Tibial artery (tissue), 4 donors: ENCODE measurements at regions of chr3 and their contacts with region 1.

Region 1: DNA sequence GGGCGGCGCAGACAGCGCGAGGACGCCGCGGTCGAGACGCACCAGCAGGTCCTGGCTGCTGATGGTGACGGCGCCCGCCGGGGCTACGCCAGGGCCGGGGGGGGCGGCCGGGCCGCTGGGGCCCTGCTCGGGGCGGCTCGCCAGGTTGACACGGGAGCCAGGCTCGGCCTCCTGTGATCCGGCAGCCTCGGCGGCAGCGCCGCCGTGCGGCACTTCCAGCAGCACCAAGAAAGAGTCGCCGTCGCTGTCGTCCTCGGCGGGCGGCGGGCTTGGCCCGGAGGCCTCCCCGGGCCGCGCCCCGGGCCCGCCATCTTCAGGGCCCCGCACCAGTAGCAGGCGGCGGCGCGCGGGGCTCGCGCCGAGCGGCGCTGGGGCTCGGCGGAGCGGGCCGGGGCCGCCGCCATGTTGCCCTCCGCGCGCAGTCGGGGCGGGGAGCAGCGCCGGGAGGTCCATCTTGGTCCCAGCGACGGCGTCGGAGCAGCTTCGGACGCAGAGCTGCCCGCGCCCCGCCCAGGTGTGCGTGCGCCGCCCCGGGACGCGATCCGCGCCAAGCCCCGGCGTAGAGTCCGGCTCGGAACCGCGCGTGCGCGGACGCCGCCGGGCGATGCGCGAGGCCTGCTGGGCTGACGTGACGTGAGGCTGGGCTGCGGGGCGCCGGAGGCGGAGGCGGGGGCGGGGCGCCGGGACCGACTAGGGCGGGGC is at the start of gene ZXDC:
- DNase-seq: peak; percentile 91 to 97
- H3K4me3 ChIP-seq: peak within 1 kb of the TSS; percentile 71 to 75
- H3K27ac ChIP-seq: peak within 1 kb of the TSS; percentile 88 to 91
- H3K4me1 ChIP-seq: peaks cover 0 to 48% (median 39%) of the 10 kb centered on the region in 4 donors
- H3K27me3 ChIP-seq: no peaks in the 10 kb centered on the region
- CTCF ChIP-seq: peak; percentile 18 to 36

Region 2: DNA sequence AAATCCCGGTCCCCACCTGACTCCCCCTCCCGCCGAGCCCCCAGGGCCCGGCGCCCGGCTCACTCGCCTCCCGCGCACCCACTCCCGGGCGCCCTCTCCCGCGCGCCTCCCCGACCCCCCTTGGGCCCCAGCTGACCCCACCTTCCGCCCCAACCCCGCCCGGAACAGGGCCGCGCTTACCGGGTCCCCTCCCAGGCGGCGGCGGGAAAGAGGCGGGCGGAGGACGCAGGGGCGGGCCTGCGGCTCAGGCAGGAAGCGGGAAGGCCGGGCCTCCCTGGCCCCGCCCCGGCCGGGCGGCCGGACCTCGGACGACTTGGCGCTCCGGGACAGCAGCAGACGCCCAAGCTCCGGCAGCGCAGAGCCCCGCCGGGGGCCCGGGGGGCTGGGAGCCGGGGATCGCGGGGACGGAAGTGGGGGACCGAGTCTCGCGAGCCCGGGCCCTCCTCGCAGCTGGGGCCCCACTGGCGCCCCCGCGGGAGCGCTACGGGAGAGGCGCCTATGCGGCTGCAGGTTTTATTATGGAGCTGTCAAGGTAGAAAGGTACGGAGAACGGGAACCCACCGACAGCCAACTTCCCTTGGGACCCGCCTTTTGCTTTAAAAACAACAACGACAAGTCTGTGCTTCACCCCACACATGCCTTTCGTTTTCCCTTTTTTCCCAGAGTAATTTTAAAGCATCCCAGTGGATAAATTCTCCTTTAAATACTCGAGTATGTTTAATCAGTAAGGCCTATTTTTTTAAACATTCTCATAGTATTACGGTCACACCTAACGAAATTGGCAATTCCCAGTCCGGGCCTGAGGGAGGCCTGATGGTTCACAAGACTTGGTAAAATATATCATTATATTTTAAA is 391.4 kb before region 1 on chr3 and contains the start of gene SLC41A3:
- intact Hi-C with region 1: loop called (anchors 5 kb)
- DNase-seq: peak; percentile 90 to 96
- H3K4me3 ChIP-seq: peak within 1 kb of the TSS; percentile 79 to 87
- H3K27ac ChIP-seq: peak within 1 kb of the TSS; percentile 92 to 94
- H3K4me1 ChIP-seq: peaks cover 0 to 24% (median 19%) of the 10 kb centered on the region in 4 donors
- H3K27me3 ChIP-seq: no peaks in the 10 kb centered on the region
- CTCF ChIP-seq: peak; percentile 30 to 35

Region 3: GRCh38 chr3:126212602-126213378 is 262.8 kb before region 1 on chr3:
- intact Hi-C with region 1: loop called (anchors 10 kb)
- DNase-seq: peak in 1 of 2 donors; percentile 72
- H3K4me3 ChIP-seq: peak overlapping the region; percentile 50 to 64
- H3K27ac ChIP-seq: peak overlapping the region; percentile 81 to 86
- H3K4me1 ChIP-seq: peaks cover 0 to 37% (median 31%) of the 10 kb centered on the region in 4 donors
- H3K27me3 ChIP-seq: no peaks in the 10 kb centered on the region
- CTCF ChIP-seq: peak in 1 of 2 experiments; percentile 64

Region 4: GRCh38 chr3:126267226-126267975 is 208.2 kb before region 1 on chr3:
- intact Hi-C with region 1: loop called (anchors 10 kb)
- DNase-seq: peak; percentile 84 to 96
- H3K4me3 ChIP-seq: peak overlapping the region; percentile 38 to 46
- H3K27ac ChIP-seq: peak overlapping the region; percentile 89 to 92
- H3K4me1 ChIP-seq: peaks cover 24 to 76% (median 56%) of the 10 kb centered on the region in 4 donors
- H3K27me3 ChIP-seq: no peaks in the 10 kb centered on the region
- CTCF ChIP-seq: peak; percentile 22 to 28

Region 5: GRCh38 chr3:126394575-126395228 is 80.9 kb before region 1 on chr3 and contains the start of gene CFAP100:
- intact Hi-C with region 1: loop called (anchors 5 kb)
- DNase-seq: peak; percentile 39 to 71
- H3K4me3 ChIP-seq: peak within 1 kb of the TSS; percentile 32 to 44
- H3K27ac ChIP-seq: peak within 1 kb of the TSS in 1 of 2 donors; percentile 22
- H3K4me1 ChIP-seq: peaks cover 0 to 10% (median 5%) of the 10 kb centered on the region in 4 donors
- H3K27me3 ChIP-seq: peaks cover 0 to 5% of the 10 kb centered on the region in 2 donors
- CTCF ChIP-seq: no peak

Region 6: GRCh38 chr3:126827121-126827520 is 351.6 kb after region 1 on chr3:
- intact Hi-C with region 1: no loop called
- DNase-seq: peak in 1 of 2 donors; percentile 77
- H3K4me3 ChIP-seq: no peak overlapping the region
- H3K27ac ChIP-seq: no peak overlapping the region
- H3K4me1 ChIP-seq: no peaks in the 10 kb centered on the region
- H3K27me3 ChIP-seq: no peaks in the 10 kb centered on the region
- CTCF ChIP-seq: no peak